ENCODE measurements at regions of chr16 and their contacts with region 1.

Region 1: GRCh38 chr16:24975428-24975889 is 39.7 kb downstream of the ARHGAP17 start:
- DNase-seq: peak; percentile 42
- H3K4me3 ChIP-seq: no peak overlapping the region
- H3K27ac ChIP-seq: no peak overlapping the region
- H3K4me1 ChIP-seq: peaks cover 40% of the 10 kb centered on the region
- H3K27me3 ChIP-seq: no peaks in the 10 kb centered on the region

Region 2: GRCh38 chr16:24282141-24282540 is 693.3 kb before region 1 on chr16:
- in situ Hi-C with region 1: no loop called
- DNase-seq: no peak
- H3K4me3 ChIP-seq: no peak overlapping the region
- H3K27ac ChIP-seq: no peak overlapping the region
- H3K4me1 ChIP-seq: no peaks in the 10 kb centered on the region
- H3K27me3 ChIP-seq: no peaks in the 10 kb centered on the region

Region 3: GRCh38 chr16:24309222-24309905 is 666.1 kb before region 1 on chr16:
- in situ Hi-C with region 1: no loop called
- DNase-seq: peak; percentile 31
- H3K4me3 ChIP-seq: no peak overlapping the region
- H3K27ac ChIP-seq: no peak overlapping the region
- H3K4me1 ChIP-seq: no peaks in the 10 kb centered on the region
- H3K27me3 ChIP-seq: no peaks in the 10 kb centered on the region

Region 4: GRCh38 chr16:25031441-25032307 is 56.2 kb after region 1 on chr16:
- in situ Hi-C with region 1: loop called (anchors 10 kb)
- DNase-seq: peak; percentile 98
- H3K4me3 ChIP-seq: peak overlapping the region; percentile 84
- H3K27ac ChIP-seq: no peak overlapping the region
- H3K4me1 ChIP-seq: peaks cover 7% of the 10 kb centered on the region; the same call in 1 of the 2 replicates
- H3K27me3 ChIP-seq: no peaks in the 10 kb centered on the region

Measured in GM23248 (cell line).